ENCODE measurements at regions of chr2 and their contacts with region 1.

Region 1: DNA sequence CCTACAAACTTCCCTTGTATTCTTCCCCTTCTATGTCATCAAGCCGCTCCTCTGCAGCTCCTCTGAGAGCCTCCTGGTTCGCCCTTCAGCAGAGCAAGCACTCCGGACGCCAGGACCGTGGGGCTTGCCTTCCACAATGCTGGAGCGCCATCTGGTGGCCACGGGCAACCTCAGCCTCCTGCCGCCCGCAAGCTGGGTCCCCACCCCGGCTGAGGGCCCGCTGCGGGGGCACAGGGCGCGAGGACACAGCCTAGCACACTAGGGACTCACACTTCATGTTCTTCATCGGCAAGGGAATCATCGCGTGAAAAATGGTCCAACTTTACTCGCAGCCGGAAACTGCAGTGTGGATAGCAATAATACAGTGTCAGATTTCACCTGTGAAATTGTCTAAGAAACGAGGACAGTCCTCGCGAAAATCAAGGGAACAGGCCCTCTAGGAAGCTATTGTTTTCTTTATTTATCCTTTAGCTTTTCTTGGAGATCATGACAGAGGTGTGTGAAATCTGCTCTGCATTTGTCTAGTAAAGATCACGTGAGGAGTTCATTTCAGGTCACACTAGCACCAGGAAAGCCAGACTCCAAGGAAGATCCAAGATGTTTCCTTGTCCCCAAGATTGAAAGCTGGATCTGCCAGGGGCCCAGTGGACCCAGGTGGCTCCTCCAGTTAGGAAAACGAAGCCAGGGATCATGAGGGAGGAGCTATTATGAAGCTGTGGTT is 5.8 kb downstream of the PRLH start:
- DNase-seq: peak in 1 of 2 donors; percentile 93
- H3K4me3 ChIP-seq: no peak overlapping the region
- H3K27ac ChIP-seq: no peak overlapping the region
- H3K4me1 ChIP-seq: peaks cover 0 to 5% of the 10 kb centered on the region in 2 donors
- H3K27me3 ChIP-seq: no peaks in the 10 kb centered on the region
- CTCF ChIP-seq: peak; percentile 97 to 99 (median 98)

Region 2: GRCh38 chr2:237092920-237093781 is 479.0 kb before region 1 on chr2:
- intact Hi-C with region 1: loop called (anchors 5 kb)
- DNase-seq: no peak
- H3K4me3 ChIP-seq: no peak overlapping the region
- H3K27ac ChIP-seq: no peak overlapping the region
- H3K4me1 ChIP-seq: no peaks in the 10 kb centered on the region
- H3K27me3 ChIP-seq: no peaks in the 10 kb centered on the region
- CTCF ChIP-seq: peak; percentile 16 to 33 (median 24)

Region 3: GRCh38 chr2:237122214-237122666 is 449.9 kb before region 1 on chr2:
- intact Hi-C with region 1: loop called (anchors 1 kb)
- DNase-seq: peak in 1 of 2 donors; percentile 76
- H3K4me3 ChIP-seq: no peak overlapping the region
- H3K27ac ChIP-seq: no peak overlapping the region
- H3K4me1 ChIP-seq: no peaks in the 10 kb centered on the region
- H3K27me3 ChIP-seq: no peaks in the 10 kb centered on the region
- CTCF ChIP-seq: peak; percentile 68 to 71 (median 69)

Region 4: GRCh38 chr2:237171396-237171795 is 400.8 kb before region 1 on chr2:
- intact Hi-C with region 1: loop called (anchors 5 kb)
- DNase-seq: no peak
- H3K4me3 ChIP-seq: peak overlapping the region in 1 of 2 donors; percentile 31
- H3K27ac ChIP-seq: peak overlapping the region; percentile 32 to 67
- H3K4me1 ChIP-seq: peaks cover 0 to 6% of the 10 kb centered on the region in 2 donors
- H3K27me3 ChIP-seq: no peaks in the 10 kb centered on the region
- CTCF ChIP-seq: peak in 2 of 3 experiments; percentile 39 to 44

Region 5: GRCh38 chr2:237413777-237414661 is 158.2 kb before region 1 on chr2 and contains the start of gene COL6A3:
- intact Hi-C with region 1: loop called (anchors 2 kb)
- DNase-seq: no peak
- H3K4me3 ChIP-seq: peak within 1 kb of the TSS; percentile 45 to 67
- H3K27ac ChIP-seq: peak within 1 kb of the TSS; percentile 76 to 77
- H3K4me1 ChIP-seq: peaks cover 9 to 12% of the 10 kb centered on the region in 2 donors
- H3K27me3 ChIP-seq: no peaks in the 10 kb centered on the region
- CTCF ChIP-seq: no peak
- total RNA-seq, gene COL6A3: 156 TPM

Region 6: DNA sequence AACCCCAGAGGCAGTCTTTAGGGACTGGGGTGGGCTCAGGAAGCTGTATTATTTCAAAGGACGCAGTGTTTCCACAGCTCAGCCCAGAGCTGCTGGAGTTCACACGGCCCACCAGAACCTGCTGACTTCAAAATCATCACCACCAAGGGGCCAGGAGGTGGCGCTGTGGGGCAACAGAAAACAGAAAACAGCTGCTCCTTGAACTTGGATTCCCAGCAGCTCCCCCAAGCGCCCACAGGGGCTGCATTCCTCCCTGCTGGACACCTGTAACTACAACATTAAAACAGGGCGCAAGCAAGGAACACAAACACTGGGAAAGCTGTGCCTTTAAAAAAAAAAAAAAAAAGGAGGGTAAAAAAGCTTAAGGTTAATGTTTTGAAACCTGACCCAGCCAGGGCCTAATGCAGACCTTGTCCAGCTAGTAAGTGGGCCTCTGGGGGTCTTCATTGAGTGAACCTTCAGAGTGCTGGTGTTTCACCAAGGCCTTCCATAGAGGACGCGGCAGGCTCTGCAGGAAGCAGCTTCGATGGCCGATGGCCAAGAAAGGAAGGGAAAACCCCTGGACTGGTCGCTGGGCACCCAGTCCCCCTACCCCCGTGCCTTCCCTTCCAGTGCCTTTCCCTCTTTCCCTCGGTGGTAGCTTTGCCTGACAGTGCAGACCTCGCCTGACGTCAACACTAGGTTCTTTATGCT is 59.3 kb before region 1 on chr2:
- intact Hi-C with region 1: loop called (anchors 1 kb)
- DNase-seq: peak; percentile 25 to 91
- H3K4me3 ChIP-seq: no peak overlapping the region
- H3K27ac ChIP-seq: no peak overlapping the region
- H3K4me1 ChIP-seq: no peaks in the 10 kb centered on the region
- H3K27me3 ChIP-seq: no peaks in the 10 kb centered on the region
- CTCF ChIP-seq: peak; percentile 77 to 93 (median 92)